Endothelial cell of umbilical vein (primary cell): ENCODE measurements at regions of chr3 and their contacts with region 1.

Region 1: GRCh38 chr3:171459942-171460724 is at the start of gene TNIK:
- DNase-seq: peak; percentile 91
- H3K4me3 ChIP-seq: peak within 1 kb of the TSS; percentile 74 to 91 (median 89)
- H3K27ac ChIP-seq: peak within 1 kb of the TSS; percentile 38
- H3K4me1 ChIP-seq: peaks cover 25% of the 10 kb centered on the region
- H3K27me3 ChIP-seq: no peaks in the 10 kb centered on the region
- CTCF ChIP-seq: peak; percentile 6 to 28
- POLR2A ChIP-seq: peak; percentile 59
- total RNA-seq, gene TNIK: 29.6 and 39.7 TPM in 2 replicates

Region 2: DNA sequence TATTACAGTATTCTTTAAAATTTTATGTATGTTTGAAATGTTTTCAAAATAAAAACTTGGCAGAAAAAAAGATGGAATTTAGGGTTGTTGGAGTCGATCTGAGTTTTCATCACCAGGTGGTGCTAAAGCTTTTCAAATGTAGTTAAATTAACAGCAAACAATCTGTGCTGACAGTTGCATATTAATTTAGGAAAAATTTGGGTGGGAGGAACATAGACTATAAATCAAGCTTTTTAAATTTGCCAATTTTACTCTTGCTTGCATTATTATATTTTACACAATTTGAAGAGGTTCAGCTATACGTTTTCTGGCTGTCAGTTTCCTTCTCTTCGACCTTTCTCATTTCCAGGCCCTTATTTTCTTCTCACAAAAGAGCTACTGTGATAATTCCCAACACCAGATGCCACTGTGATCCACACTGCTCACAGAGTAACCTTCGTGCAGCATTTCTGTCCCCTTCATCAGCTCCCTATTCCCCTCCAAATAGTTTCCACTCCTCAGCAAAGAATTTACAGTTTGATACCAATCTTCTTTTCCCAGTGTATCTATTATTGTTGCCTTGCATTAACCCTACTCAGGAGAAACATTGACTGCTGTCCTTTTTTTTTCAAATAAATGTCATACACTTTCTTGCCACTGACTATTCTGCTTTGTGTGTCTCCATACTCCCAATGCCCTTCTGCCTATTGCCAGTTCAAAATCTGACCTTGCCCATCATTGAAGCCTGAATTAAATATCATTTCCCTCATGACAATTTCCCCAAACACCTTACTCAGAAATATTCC is 498.3 kb before region 1 on chr3:
- CTCF ChIA-PET with region 1: interaction called, 6 read pairs
- POLR2A ChIA-PET with region 1: no interaction called
- dilution Hi-C with region 1: no loop called
- intact Hi-C with region 1: loop called (anchors 10 kb)
- DNase-seq: peak; percentile 65
- H3K4me3 ChIP-seq: no peak overlapping the region
- H3K27ac ChIP-seq: no peak overlapping the region
- H3K4me1 ChIP-seq: no peaks in the 10 kb centered on the region
- H3K27me3 ChIP-seq: peaks cover 0 to 2% of the 10 kb centered on the region in 2 experiments
- CTCF ChIP-seq: peak; percentile 37 to 40
- POLR2A ChIP-seq: no peak

Region 3: DNA sequence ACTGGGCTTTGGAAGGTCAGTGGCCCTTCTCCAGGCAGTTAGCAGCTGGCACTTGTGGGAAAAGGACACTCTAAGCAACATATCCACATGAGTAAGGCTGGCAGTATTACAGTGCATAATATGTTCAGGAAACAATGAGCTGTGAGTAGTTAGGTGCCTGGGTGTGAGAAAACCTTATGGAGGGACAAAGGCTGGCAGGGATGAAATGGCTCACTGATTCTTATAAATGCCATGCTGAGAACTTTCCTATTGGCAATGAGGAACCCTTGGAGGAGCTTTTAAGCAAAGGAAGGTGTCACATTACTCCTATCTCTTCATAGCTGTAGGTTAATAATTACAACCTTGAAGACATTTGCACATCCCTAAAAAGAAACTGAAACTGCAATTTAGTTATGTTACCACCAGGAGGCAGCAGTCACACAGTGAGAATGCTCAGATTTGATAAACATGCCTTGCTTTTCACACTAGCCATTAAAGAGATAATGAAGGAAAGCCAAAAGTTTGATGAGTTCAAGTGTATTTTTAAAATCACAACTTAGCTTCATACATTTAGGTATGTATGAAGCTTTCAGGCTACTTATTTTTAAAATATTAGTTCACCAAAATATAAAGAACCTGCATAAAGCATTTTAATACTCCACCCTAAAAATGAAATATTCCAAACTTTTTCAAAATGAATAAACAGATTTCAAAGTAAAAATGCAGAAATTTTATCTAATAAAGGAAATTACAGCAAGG is 297.0 kb before region 1 on chr3:
- CTCF ChIA-PET with region 1: interaction called, 4 read pairs
- POLR2A ChIA-PET with region 1: no interaction called
- dilution Hi-C with region 1: no loop called
- intact Hi-C with region 1: loop called (anchors 2 kb)
- DNase-seq: no peak
- H3K4me3 ChIP-seq: no peak overlapping the region
- H3K27ac ChIP-seq: no peak overlapping the region
- H3K4me1 ChIP-seq: no peaks in the 10 kb centered on the region
- H3K27me3 ChIP-seq: no peaks in the 10 kb centered on the region
- CTCF ChIP-seq: peak; percentile 51 to 52
- POLR2A ChIP-seq: no peak

Region 4: GRCh38 chr3:171206283-171206682 is 253.8 kb before region 1 on chr3:
- CTCF ChIA-PET with region 1: interaction called, 4 read pairs
- POLR2A ChIA-PET with region 1: no interaction called
- dilution Hi-C with region 1: no loop called
- intact Hi-C with region 1: loop called (anchors 1 kb)
- DNase-seq: peak; percentile 74
- H3K4me3 ChIP-seq: no peak overlapping the region
- H3K27ac ChIP-seq: peak overlapping the region; percentile 91
- H3K4me1 ChIP-seq: peaks cover 39% of the 10 kb centered on the region
- H3K27me3 ChIP-seq: no peaks in the 10 kb centered on the region
- CTCF ChIP-seq: no peak
- POLR2A ChIP-seq: no peak

Region 5: GRCh38 chr3:171334465-171334811 is 125.7 kb before region 1 on chr3:
- CTCF ChIA-PET with region 1: interaction called, 4 read pairs
- POLR2A ChIA-PET with region 1: no interaction called
- dilution Hi-C with region 1: no loop called
- intact Hi-C with region 1: loop called (anchors 5 kb)
- DNase-seq: peak; percentile 28
- H3K4me3 ChIP-seq: no peak overlapping the region
- H3K27ac ChIP-seq: no peak overlapping the region
- H3K4me1 ChIP-seq: peaks cover 11% of the 10 kb centered on the region
- H3K27me3 ChIP-seq: no peaks in the 10 kb centered on the region
- CTCF ChIP-seq: no peak
- POLR2A ChIP-seq: no peak

Region 6: DNA sequence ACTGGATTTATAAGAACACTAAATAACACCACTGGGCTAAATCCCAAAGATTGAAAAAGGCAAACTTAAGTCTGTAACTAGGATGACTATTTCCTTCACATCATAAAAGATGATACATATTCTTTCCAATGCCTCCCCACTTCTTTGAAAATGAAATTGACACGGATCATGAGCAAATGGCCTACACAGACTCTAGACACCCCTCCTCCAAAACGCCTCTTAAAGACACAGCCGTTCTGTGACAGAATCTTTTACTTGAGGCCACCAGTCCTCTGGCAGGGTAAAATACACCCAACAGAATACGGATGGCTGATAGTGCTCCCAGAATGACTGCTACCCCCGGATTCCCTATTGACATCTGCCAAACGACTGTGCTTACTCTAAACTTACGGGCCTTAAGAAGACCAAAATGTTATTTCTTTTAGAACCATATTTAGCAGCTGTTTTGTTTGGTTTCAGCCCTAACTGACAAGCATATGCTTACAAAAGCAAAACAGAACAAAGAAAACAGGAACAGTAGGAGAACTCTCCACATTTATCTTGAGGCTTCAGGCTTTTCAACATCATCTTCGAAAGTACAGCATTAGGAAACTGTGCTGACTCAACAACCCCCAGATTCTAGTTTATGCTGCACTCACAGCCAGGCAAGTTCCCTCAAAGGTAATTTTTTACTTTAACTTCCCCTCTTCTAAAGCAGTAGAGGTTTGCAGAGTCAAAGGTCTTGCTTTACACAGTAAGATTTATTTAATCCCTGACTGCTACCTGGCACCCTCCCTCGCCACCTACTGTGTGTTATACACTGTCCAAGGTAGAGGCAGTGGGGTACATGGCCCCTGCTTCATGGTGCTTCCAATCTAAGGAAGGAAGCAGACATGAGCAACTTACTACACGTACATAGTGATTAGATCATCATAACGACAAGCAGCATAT is 84.2 kb before region 1 on chr3:
- CTCF ChIA-PET with region 1: interaction called, 3 read pairs
- POLR2A ChIA-PET with region 1: no interaction called
- dilution Hi-C with region 1: no loop called
- intact Hi-C with region 1: loop called (anchors 5 kb)
- DNase-seq: peak; percentile 51
- H3K4me3 ChIP-seq: no peak overlapping the region
- H3K27ac ChIP-seq: peak overlapping the region; percentile 82
- H3K4me1 ChIP-seq: peaks cover 46% of the 10 kb centered on the region
- H3K27me3 ChIP-seq: no peaks in the 10 kb centered on the region
- CTCF ChIP-seq: no peak
- POLR2A ChIP-seq: no peak

Region 7: DNA sequence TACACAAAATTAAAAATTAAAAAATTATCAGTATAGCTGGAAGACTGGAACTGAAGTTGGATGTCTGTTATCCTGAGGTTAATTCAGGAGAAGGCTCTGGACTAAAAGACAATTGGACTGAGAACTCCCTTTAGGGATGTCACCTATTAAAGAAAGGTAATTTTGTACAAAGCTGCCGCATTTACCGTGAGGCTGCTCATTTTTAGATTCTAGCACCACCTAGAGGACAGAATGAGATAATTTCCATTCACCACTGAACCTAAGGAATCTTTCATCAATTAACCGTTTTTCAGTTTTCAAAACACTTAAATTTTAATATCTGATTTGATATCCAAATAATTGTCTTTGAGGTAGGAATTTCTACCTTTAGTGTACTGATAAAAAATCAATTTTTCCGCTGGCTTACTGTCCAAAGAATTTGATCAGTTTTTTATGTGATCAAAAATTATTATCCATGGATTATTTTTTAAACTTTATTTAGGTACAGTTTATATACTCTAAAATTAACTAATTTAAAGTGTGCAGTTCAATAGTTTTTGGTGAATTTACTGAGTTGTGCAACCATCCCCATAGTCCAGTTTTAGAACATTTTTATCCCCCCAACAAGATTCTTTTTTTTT is 106.8 kb after region 1 on chr3:
- CTCF ChIA-PET with region 1: interaction called, 7 read pairs
- POLR2A ChIA-PET with region 1: no interaction called
- dilution Hi-C with region 1: no loop called
- intact Hi-C with region 1: loop called (anchors 2 kb)
- DNase-seq: peak; percentile 55
- H3K4me3 ChIP-seq: no peak overlapping the region
- H3K27ac ChIP-seq: no peak overlapping the region
- H3K4me1 ChIP-seq: peaks cover 8% of the 10 kb centered on the region
- H3K27me3 ChIP-seq: peaks cover 0 to 2% of the 10 kb centered on the region in 2 experiments
- CTCF ChIP-seq: peak; percentile 40 to 46
- POLR2A ChIP-seq: no peak

Region 8: DNA sequence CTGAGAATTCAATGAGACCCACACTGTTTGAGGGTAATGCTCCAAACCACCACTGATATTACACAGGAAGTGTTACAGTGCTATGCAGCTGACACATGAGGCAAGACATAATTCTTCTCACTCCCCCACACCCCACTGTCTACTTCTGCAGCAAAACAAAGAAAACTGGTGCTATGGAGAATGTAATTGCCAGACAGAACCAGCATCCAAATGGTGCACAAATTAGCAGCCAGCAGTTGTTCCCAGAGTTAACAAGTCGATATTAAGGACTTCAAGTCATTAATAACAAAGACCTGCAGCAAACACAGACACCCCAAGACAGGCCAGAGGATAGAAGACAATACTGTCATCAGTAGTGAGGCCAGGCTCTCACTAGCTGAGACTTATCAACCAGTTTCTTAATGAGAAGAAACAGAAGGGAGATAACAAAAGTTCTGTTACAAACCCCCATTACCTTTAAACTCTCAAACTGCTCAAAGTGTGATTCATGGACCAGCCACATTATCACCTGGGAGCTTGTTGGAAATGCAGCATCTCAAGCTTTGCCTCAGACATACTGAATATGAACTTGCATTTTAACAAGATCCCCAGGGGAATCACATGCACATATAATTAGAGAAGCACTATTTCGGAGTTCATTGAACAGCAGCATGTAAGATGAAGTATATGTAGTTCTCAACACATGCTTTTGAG is 520.6 kb after region 1 on chr3:
- CTCF ChIA-PET with region 1: no interaction called
- POLR2A ChIA-PET with region 1: no interaction called
- dilution Hi-C with region 1: no loop called
- intact Hi-C with region 1: no loop called
- DNase-seq: no peak
- H3K4me3 ChIP-seq: no peak overlapping the region
- H3K27ac ChIP-seq: no peak overlapping the region
- H3K4me1 ChIP-seq: no peaks in the 10 kb centered on the region
- H3K27me3 ChIP-seq: no peaks in the 10 kb centered on the region
- CTCF ChIP-seq: no peak
- POLR2A ChIP-seq: no peak